ENCODE measurements at regions of chr11 and their contacts with region 1.

Region 1: DNA sequence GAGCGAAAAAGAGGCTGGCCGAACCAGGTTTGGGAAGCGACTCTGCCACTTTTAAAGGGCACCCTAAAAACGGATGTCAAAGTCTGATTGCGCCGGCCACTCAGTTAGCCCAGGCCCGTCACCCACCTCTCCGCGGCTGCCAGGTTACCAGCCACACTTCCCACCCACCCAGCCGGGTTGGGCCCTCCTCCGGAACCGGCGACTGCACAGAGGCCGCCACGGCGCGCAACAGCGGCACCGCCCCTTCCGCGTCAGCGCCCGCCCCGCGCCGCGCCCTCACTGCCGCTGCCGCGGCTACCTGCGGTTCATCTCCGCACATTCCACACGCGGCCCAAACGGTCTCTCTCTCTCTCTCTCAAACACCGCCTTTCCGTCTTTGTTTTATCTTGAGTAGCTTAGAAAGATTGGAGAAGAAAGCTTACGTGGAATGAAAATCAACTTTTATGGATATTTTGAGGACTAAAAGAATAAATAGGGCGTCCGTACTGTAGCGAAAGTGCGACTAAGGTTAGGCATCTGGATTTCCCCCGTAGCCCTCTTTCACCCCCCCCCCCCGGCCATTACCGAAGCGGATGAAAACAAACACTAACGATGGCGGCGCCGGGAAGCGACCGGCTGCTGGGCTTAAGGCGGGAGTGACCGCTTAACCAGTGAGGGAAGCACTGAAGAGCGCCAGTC is at the starts of genes ATG13 and HARBI1:
- DNase-seq: peak; percentile 84 to 90
- H3K4me3 ChIP-seq: peak within 1 kb of the TSS; percentile 84 to 86
- H3K27ac ChIP-seq: peak within 1 kb of the TSS; percentile 90 to 91
- H3K4me1 ChIP-seq: peaks cover 0 to 50% (median 26%) of the 10 kb centered on the region in 4 donors
- H3K27me3 ChIP-seq: no peaks in the 10 kb centered on the region
- CTCF ChIP-seq: no peak

Region 2: DNA sequence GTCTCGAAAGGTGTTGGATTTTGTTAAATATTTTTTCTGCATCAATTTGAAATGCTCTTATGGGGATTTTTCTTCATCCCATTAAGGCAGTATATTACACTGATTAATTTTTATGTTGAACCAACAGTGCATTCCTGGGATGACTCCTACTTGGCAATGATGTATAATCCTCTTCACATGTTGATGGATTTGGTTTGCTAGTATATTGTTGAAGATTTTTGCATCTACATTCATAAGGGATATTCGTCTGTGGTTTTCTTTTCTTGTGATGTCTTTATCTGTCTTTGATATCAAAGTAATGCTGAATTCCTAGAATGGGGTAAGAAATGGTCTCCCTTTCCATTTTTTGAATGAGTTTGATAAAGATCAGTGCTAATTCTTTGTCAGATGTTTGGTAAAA is 830.9 kb before region 1 on chr11:
- intact Hi-C with region 1: no loop called
- DNase-seq: no peak
- H3K4me3 ChIP-seq: no peak overlapping the region
- H3K27ac ChIP-seq: no peak overlapping the region
- H3K4me1 ChIP-seq: no peaks in the 10 kb centered on the region
- H3K27me3 ChIP-seq: peaks cover 0 to 9% of the 10 kb centered on the region in 2 donors
- CTCF ChIP-seq: no peak

Region 3: GRCh38 chr11:46305295-46305694 is 311.8 kb before region 1 on chr11:
- intact Hi-C with region 1: no loop called
- DNase-seq: no peak
- H3K4me3 ChIP-seq: no peak overlapping the region
- H3K27ac ChIP-seq: no peak overlapping the region
- H3K4me1 ChIP-seq: no peaks in the 10 kb centered on the region
- H3K27me3 ChIP-seq: peaks cover 0 to 6% of the 10 kb centered on the region in 2 donors
- CTCF ChIP-seq: no peak

Region 4: DNA sequence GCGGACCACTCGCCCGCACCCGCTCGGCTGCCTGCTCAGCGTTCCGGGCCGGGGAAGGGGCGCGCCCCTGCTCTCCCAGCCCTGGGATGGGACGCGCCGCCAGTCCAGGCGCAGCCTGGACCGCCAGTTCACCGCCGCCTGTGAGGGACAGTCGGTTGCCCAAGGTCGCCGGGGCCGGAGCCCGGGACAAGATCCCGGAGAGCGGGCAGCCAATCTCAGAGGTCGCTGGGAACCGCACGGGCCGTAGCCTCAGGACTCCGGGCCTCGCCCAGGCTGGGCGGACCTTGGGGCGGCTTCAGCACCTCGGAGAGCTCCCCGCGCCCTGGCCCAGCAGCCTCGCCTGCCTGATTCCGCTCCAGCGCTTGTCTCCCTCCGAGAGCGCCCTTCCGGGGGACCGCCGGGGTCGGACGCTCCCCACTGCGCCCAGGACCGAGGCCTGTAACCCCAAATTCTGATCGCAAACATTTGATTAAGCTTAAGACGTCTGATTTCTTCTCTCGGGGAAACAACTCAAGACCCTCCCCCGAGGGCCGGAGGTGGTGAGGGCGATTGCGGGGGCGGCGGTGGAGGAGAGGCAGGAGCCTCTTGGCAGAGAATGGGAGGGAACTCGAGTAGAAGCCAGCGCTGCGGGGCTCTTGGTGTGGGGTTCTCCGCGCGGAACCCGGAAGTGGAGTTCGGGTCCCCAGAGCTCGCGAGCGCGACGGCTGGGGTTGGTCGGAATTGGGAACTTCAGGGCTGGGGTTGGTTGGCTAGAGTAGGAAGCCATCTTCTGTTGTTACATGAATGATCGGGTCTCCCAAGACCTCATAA is 224.5 kb before region 1 on chr11:
- intact Hi-C with region 1: loop called (anchors 10 kb)
- DNase-seq: peak; percentile 75 to 86
- H3K4me3 ChIP-seq: peak overlapping the region; percentile 9 to 30
- H3K27ac ChIP-seq: no peak overlapping the region
- H3K4me1 ChIP-seq: peaks cover 7 to 43% (median 35%) of the 10 kb centered on the region in 4 donors
- H3K27me3 ChIP-seq: peaks cover 3 to 48% of the 10 kb centered on the region in 2 donors
- CTCF ChIP-seq: no peak

Region 5: GRCh38 chr11:46710821-46711269 is 93.7 kb after region 1 on chr11:
- intact Hi-C with region 1: loop called (anchors 10 kb)
- DNase-seq: peak; percentile 85 to 94
- H3K4me3 ChIP-seq: no peak overlapping the region
- H3K27ac ChIP-seq: peak overlapping the region; percentile 90
- H3K4me1 ChIP-seq: peaks cover 0 to 53% (median 18%) of the 10 kb centered on the region in 4 donors
- H3K27me3 ChIP-seq: no peaks in the 10 kb centered on the region
- CTCF ChIP-seq: no peak